WTC11 (cell line): ENCODE measurements at regions of chr19 and their contacts with region 1.

Region 1: DNA sequence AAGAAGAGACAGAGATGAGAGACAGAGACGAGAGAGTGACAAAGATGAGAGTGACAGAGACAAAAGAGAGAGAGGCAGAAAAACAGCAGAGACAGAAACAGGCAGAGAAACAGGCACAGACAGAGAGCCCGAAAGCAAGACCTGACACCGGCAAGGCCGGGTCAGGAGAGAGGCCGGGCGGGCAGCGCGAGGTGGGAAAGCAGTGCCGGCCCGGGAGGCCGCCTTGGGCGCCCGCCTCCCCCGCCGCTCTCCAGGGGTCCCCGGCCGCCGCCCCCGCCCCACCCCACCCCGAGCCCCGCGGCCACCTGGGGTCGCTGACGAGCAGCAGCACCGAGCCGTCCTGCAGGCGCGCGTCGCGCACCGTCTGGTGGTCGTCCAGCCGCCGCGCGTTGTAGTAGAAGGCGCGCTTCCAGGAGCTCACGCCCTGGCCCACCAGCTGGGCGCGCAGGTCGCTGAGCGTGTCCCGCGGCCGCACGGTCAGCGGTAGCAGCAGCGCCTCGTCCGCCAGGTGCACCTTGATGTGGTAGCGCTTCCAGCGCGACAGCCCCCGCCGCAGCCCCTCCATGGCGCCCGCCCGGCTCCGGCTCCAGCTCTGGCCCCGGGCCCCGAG is at the start of gene TINCR:
- DNase-seq: peak; percentile 64
- ATAC-seq: peak; percentile 81
- H3K4me3 Mint-ChIP-seq: peak within 1 kb of the TSS; percentile 52
- H3K27ac Mint-ChIP-seq: no peak within 1 kb of the TSS
- H3K4me1 Mint-ChIP-seq: no peaks in the 10 kb centered on the region
- H3K27me3 Mint-ChIP-seq: peaks cover 16% of the 10 kb centered on the region
- CTCF ChIP-seq: no peak
- total RNA-seq, gene TINCR: 0.60 to 0.85 TPM (median 0.76 TPM) in 3 replicates

Region 2: DNA sequence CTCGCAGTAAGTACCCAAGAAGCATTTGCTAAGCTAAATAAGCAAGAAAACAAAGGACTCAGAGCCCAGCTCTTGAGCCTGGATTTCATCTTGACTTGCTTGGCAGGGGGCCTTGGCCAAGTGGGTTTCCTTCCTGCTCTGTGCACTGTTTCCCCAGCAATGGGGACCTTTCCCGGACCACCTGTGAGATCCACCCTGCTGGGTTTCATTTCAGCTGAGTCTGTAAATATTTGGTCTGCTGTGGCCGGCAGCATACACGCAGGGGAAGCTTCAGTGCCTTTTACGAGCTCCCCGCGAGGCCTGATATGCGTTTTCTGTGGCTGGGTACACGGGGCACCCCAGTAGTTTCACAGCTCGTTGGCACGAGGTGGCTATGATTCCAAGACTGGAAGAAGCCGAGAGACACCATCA is 12.7 kb after region 1 on chr19:
- CTCF ChIA-PET with region 1: interaction called, 11 read pairs
- POLR2A ChIA-PET with region 1: no interaction called
- DNase-seq: no peak
- ATAC-seq: no peak
- H3K4me3 Mint-ChIP-seq: no peak overlapping the region
- H3K27ac Mint-ChIP-seq: peak overlapping the region; percentile 65; the same call in 1 of the 2 replicates
- H3K4me1 Mint-ChIP-seq: peaks cover 17% of the 10 kb centered on the region
- H3K27me3 Mint-ChIP-seq: no peaks in the 10 kb centered on the region
- CTCF ChIP-seq: no peak

Region 3: DNA sequence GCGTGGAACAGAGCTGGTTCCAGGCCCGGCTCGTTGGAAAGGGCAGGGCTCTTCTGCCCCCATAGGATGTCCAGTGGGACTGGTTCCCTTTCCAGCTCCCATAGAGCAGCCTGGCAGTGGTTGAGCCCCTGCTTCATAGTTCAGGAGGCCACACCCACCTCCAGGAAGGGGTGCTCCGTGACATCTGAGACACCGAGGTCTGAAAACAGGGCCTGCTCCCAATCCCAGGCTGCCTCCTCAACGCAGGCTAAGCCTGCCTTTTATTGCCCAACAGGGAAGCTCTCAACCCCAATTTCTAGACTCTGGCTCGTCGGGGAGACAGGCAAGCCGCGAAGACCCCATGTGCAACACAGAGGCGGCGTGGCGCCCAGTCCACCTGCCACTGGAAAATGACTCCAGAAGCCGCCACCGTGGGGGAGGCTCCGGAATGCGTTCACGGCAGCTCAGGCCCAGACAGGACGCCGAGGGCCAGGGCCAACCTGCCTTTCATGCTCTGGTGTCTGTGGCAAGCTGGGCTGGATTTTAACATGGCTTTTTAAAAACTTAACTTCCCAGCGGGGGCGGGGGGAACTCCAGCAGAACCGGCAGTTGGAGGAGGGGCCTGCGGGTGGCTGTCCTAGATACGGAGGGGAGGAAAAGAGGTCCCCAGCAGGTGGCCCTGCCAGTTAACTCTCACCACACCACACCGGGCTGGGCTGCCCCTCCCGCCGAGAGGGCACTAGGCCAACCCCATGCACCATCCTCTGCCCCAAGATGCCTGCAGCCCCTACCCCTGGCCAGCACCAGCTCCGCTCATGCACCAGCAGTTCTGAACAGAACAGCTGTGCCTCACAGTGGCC is 18.2 kb after region 1 on chr19:
- CTCF ChIA-PET with region 1: interaction called, 11 read pairs
- POLR2A ChIA-PET with region 1: no interaction called
- DNase-seq: peak; percentile 73
- ATAC-seq: peak; percentile 79
- H3K4me3 Mint-ChIP-seq: peak overlapping the region; percentile 61
- H3K27ac Mint-ChIP-seq: peak overlapping the region; percentile 95
- H3K4me1 Mint-ChIP-seq: peaks cover 17% of the 10 kb centered on the region
- H3K27me3 Mint-ChIP-seq: no peaks in the 10 kb centered on the region
- CTCF ChIP-seq: no peak

Region 4: GRCh38 chr19:5595745-5596144 is 28.3 kb after region 1 on chr19:
- CTCF ChIA-PET with region 1: no interaction called
- POLR2A ChIA-PET with region 1: no interaction called
- DNase-seq: no peak
- ATAC-seq: no peak
- H3K4me3 Mint-ChIP-seq: no peak overlapping the region
- H3K27ac Mint-ChIP-seq: no peak overlapping the region; the same call in 1 of the 2 replicates
- H3K4me1 Mint-ChIP-seq: no peaks in the 10 kb centered on the region
- H3K27me3 Mint-ChIP-seq: no peaks in the 10 kb centered on the region; the same call in 1 of the 2 replicates
- CTCF ChIP-seq: no peak